ENCODE measurements at regions of chr2 and their contacts with region 1.

Region 1: GRCh38 chr2:85066874-85067351 is 66.3 kb upstream of the TCF7L1 start:
- DNase-seq: peak; percentile 82 to 83
- H3K4me3 ChIP-seq: peak overlapping the region; percentile 13 to 41
- H3K27ac ChIP-seq: no peak overlapping the region
- H3K4me1 ChIP-seq: peaks cover 0 to 5% (median 1%) of the 10 kb centered on the region in 4 donors
- H3K27me3 ChIP-seq: peaks cover 0 to 28% of the 10 kb centered on the region in 2 donors
- CTCF ChIP-seq: peak; percentile 83 to 85

Region 2: GRCh38 chr2:85302121-85302520 is 235.2 kb after region 1 on chr2:
- intact Hi-C with region 1: loop called (anchors 1 kb)
- DNase-seq: no peak
- H3K4me3 ChIP-seq: no peak overlapping the region
- H3K27ac ChIP-seq: no peak overlapping the region
- H3K4me1 ChIP-seq: no peaks in the 10 kb centered on the region
- H3K27me3 ChIP-seq: no peaks in the 10 kb centered on the region
- CTCF ChIP-seq: no peak